ENCODE measurements at regions of chr5 and their contacts with region 1.

Region 1: DNA sequence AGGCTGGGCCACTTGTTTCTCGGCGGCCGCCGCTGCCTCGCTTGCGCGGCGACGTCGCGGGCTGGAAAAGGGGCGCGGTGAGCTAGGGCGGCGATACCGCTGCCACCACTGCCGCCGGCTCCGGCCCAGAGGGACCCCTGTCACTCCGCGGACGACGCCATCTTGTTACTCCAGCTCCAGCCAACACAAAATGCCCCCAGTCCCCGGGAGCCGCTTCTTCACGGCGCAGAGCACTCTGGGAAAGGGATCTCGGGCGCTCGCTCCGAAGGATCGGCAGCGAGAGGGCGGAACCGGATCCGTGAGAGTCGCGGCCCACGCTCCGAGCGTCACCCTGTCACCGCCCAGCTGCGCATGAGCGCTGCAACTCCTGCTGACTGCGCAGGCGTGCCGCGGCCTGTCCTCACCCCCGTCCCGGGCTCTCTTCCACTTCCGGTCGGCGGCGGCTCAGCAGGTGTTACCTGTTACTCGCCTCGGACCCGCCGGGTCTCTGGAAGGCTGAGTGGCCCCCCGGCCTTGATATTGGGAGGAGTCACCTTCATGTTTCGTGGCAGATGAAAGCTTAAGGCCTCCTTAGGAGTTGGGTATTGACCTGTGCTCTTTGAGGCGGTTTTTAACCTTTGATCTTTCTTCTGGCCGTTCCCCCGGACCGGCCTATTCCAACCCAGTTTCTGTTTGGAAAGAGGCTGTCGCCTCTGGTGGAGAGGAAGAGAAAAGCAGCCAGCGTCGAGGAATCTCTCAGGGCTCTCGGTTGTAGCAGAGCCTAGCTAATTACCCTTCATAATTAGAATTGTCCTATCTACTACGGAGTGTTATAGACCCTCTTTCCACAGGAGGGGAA is at the start of gene CSNK1A1:
- DNase-seq: peak; percentile 98 to 100 (median 99)
- ATAC-seq: peak; percentile 85
- H3K4me3 ChIP-seq: peak within 1 kb of the TSS; percentile 90 to 94
- H3K4me3 Mint-ChIP-seq: peak within 1 kb of the TSS; percentile 97
- H3K27ac ChIP-seq: peak within 1 kb of the TSS; percentile 88 to 92
- H3K27ac Mint-ChIP-seq: peak within 1 kb of the TSS; percentile 95
- H3K4me1 ChIP-seq: peaks cover 27% of the 10 kb centered on the region
- H3K4me1 Mint-ChIP-seq: peaks cover 30% of the 10 kb centered on the region
- H3K27me3 ChIP-seq: no peaks in the 10 kb centered on the region
- H3K27me3 Mint-ChIP-seq: no peaks in the 10 kb centered on the region
- CTCF ChIP-seq: peak; percentile 62
- total RNA-seq, gene CSNK1A1: 213 to 221 TPM

Region 2: DNA sequence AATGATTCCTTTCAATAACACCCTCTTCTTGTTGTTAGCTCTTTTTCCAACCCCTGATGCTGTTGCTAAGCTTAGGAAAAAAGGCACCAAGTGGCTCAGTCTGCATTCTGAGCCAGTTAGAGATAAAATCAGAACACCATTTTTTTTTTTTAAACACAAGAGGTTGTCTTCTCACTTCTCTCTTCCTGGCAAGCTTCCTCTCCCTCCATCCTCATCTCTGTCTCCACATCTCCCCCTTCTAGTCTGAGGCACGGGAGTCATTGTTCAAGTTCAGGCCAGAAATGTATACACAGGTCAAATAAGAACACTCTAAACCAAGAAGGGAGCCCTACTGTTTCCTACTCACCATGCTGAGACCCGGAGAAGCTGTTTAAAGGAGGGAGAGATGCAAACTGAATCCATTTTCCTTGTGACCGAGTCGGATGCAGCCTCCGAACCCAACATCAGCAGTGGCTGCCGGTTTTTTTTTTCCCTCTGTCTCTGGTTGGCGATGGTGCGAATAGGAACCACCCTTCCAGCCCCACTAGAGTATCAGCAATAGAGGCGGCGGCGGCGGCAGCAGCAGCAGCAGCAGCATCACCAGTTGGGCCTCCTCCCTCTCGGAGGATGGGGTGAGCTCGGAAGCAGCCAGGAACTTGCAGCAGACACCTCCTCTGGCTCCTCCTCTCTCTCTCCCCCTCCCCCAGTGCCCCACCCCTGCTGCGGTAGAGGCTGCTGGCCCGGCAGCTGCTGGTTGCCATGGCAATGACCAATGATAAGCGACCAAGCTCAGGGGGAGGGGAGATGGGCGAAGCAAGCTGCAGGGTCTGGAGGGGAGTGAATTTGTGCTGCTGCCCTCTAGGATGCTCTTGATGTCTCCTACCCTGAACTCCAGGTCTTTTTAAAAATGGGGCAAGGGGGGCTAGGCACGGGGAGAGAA is 1769.0 kb before region 1 on chr5 and contains the start of gene JAKMIP2:
- CTCF ChIA-PET with region 1: no interaction called
- POLR2A ChIA-PET with region 1: no interaction called
- intact Hi-C with region 1: loop called in 1 of 2 experiments (anchors 5 kb)
- DNase-seq: peak; percentile 70 to 92 (median 85)
- ATAC-seq: peak; percentile 96
- H3K4me3 ChIP-seq: peak within 1 kb of the TSS; percentile 51 to 60
- H3K4me3 Mint-ChIP-seq: peak within 1 kb of the TSS; percentile 84
- H3K27ac ChIP-seq: peak within 1 kb of the TSS; percentile 46 to 77
- H3K27ac Mint-ChIP-seq: peak within 1 kb of the TSS; percentile 92
- H3K4me1 ChIP-seq: peaks cover 11% of the 10 kb centered on the region
- H3K4me1 Mint-ChIP-seq: peaks cover 31% of the 10 kb centered on the region
- H3K27me3 ChIP-seq: no peaks in the 10 kb centered on the region
- H3K27me3 Mint-ChIP-seq: no peaks in the 10 kb centered on the region
- CTCF ChIP-seq: no peak
- total RNA-seq, gene JAKMIP2: 1.1 to 2.0 TPM

Region 3: GRCh38 chr5:149357370-149358293 is 193.8 kb before region 1 on chr5 and contains the start of gene PCYOX1L:
- CTCF ChIA-PET with region 1: interaction called, 3 read pairs
- POLR2A ChIA-PET with region 1: interaction called, 8 read pairs
- intact Hi-C with region 1: loop called (anchors 1 to 2 kb)
- DNase-seq: peak; percentile 89 to 99 (median 95)
- ATAC-seq: peak; percentile 96
- H3K4me3 ChIP-seq: peak within 1 kb of the TSS; percentile 83 to 88
- H3K4me3 Mint-ChIP-seq: peak within 1 kb of the TSS; percentile 93
- H3K27ac ChIP-seq: peak within 1 kb of the TSS; percentile 63 to 74
- H3K27ac Mint-ChIP-seq: peak within 1 kb of the TSS; percentile 92
- H3K4me1 ChIP-seq: peaks cover 37% of the 10 kb centered on the region
- H3K4me1 Mint-ChIP-seq: peaks cover 67% of the 10 kb centered on the region
- H3K27me3 ChIP-seq: no peaks in the 10 kb centered on the region
- H3K27me3 Mint-ChIP-seq: no peaks in the 10 kb centered on the region
- CTCF ChIP-seq: no peak
- total RNA-seq, gene PCYOX1L: 18.9 to 21.9 TPM

Region 4: DNA sequence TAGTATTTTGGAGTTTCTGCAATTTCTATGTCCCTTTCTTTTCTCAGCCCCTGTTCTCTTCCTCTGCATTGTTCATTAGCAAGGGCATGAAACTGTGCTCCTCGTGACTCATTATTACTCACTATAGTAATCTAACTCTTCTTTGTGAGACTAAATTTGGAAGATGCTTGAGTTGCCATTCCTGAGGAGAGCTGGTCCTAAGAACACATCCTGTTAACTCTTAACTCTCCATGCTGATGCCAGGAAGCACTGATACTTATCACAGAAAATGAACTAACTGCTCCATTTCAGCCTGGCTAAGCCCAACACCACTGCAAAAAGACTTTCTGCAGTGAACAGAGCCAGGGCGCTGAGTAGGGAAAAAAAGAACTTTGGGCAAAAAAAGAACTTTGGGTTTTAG is 10.4 kb after region 1 on chr5:
- CTCF ChIA-PET with region 1: interaction called, 12 read pairs
- POLR2A ChIA-PET with region 1: interaction called, 17 read pairs
- intact Hi-C with region 1: loop called in 1 of 2 experiments (anchors 1 kb)
- DNase-seq: no peak
- ATAC-seq: no peak
- H3K4me3 ChIP-seq: no peak overlapping the region
- H3K4me3 Mint-ChIP-seq: no peak overlapping the region
- H3K27ac ChIP-seq: no peak overlapping the region
- H3K27ac Mint-ChIP-seq: no peak overlapping the region
- H3K4me1 ChIP-seq: peaks cover 4% of the 10 kb centered on the region
- H3K4me1 Mint-ChIP-seq: peaks cover 17% of the 10 kb centered on the region
- H3K27me3 ChIP-seq: no peaks in the 10 kb centered on the region
- H3K27me3 Mint-ChIP-seq: no peaks in the 10 kb centered on the region
- CTCF ChIP-seq: no peak

Region 5: DNA sequence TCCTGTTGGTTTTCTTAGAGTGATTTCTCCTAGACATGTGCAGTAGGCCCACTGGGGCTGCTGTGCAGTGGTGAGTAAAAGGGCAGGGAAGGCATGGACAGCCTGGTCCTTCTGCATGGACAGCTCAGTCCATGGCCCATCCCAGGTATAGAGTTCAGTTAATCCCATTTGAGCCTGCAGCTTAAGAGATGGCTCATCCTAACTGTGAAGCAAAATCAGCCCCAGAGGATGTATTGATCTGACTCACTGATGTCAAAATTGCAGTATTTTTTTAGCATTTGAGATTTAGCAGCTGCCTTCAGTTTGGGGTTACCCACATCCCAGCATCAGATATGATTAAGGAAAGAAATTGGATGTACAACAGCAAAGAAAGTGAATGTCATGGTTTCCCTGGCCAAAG is 299.8 kb after region 1 on chr5:
- CTCF ChIA-PET with region 1: no interaction called
- POLR2A ChIA-PET with region 1: no interaction called
- intact Hi-C with region 1: no loop called
- DNase-seq: no peak
- ATAC-seq: no peak
- H3K4me3 ChIP-seq: no peak overlapping the region
- H3K4me3 Mint-ChIP-seq: no peak overlapping the region
- H3K27ac ChIP-seq: no peak overlapping the region
- H3K27ac Mint-ChIP-seq: no peak overlapping the region
- H3K4me1 ChIP-seq: no peaks in the 10 kb centered on the region
- H3K4me1 Mint-ChIP-seq: no peaks in the 10 kb centered on the region
- H3K27me3 ChIP-seq: no peaks in the 10 kb centered on the region
- H3K27me3 Mint-ChIP-seq: no peaks in the 10 kb centered on the region
- CTCF ChIP-seq: no peak

Region 6: GRCh38 chr5:150000256-150000989 is 449.0 kb after region 1 on chr5 and contains the starts of genes HMGXB3 and TIGD6:
- CTCF ChIA-PET with region 1: no interaction called
- POLR2A ChIA-PET with region 1: no interaction called
- intact Hi-C with region 1: loop called (anchors 1 to 2 kb)
- DNase-seq: peak; percentile 67 to 92 (median 83)
- ATAC-seq: peak; percentile 84
- H3K4me3 ChIP-seq: peak within 1 kb of the TSS; percentile 73 to 79
- H3K4me3 Mint-ChIP-seq: peak within 1 kb of the TSS; percentile 89
- H3K27ac ChIP-seq: peak within 1 kb of the TSS; percentile 75 to 80
- H3K27ac Mint-ChIP-seq: peak within 1 kb of the TSS; percentile 91
- H3K4me1 ChIP-seq: peaks cover 22% of the 10 kb centered on the region
- H3K4me1 Mint-ChIP-seq: peaks cover 39% of the 10 kb centered on the region
- H3K27me3 ChIP-seq: no peaks in the 10 kb centered on the region
- H3K27me3 Mint-ChIP-seq: no peaks in the 10 kb centered on the region
- CTCF ChIP-seq: no peak
- total RNA-seq, gene HMGXB3: 27.4 to 29.7 TPM
- total RNA-seq, gene TIGD6: 0.97 to 1.5 TPM

Measured in CD8-positive, alpha-beta T cell (primary cell).